Naive thymus-derived CD4-positive, alpha-beta T cell (primary cell): ENCODE measurements at regions of chr7 and their contacts with region 1.

Region 1: DNA sequence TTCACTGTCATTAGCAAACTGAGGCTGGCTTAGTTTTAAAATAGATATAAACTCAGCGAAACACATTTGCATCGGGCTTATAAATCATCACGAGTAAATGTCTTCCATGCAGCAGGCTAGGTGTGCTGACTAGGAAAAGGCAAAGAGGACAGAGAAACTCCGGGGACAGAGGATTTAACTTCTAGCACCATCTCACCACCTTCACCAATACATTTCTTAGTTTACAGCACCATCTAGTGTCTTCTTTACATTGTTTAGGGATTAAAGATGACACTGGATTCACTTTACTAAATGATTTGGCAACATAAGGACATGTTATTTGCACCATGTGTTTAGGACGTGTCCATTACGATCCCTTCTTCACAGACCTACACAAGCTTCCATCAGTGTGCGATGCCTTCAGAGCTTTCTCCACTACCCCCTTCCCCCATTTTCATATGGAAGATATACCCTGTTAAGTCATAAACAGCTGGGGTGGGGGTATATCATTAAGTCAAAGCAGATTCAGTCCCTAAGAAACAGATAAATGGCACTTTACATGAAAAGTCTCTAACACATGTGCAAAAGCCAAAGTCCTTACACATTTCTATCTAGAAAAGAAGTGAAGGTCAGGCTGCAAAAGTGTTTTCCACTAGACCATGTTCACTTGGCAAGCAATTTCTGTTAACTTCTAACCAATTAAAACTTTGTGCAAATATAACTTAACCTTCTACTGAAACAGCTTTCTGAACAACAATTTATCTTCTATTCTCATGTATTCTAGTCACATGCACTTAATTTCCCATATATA is 103.3 kb downstream of the GRB10 start:
- DNase-seq: peak in 6 of 9 donors; percentile 27 to 59 (median 54)
- ATAC-seq: peak; percentile 73
- H3K4me3 ChIP-seq: no peak overlapping the region
- H3K4me3 Mint-ChIP-seq: no peak overlapping the region
- H3K27ac ChIP-seq: no peak overlapping the region
- H3K27ac Mint-ChIP-seq: no peak overlapping the region
- H3K4me1 ChIP-seq: no peaks in the 10 kb centered on the region
- H3K4me1 Mint-ChIP-seq: peaks cover 0 to 5% (median 0%) of the 10 kb centered on the region in 7 donors
- H3K27me3 ChIP-seq: no peaks in the 10 kb centered on the region
- H3K27me3 Mint-ChIP-seq: peaks cover 0 to 22% (median 0%) of the 10 kb centered on the region in 5 donors

Region 2: GRCh38 chr7:50119815-50120637 is 559.4 kb before region 1 on chr7:
- CTCF ChIA-PET with region 1: no interaction called
- POLR2A ChIA-PET with region 1: no interaction called
- intact Hi-C with region 1: loop called in 1 of 2 experiments (anchors 1 kb)
- DNase-seq: peak in 7 of 9 donors; percentile 10 to 44 (median 23)
- ATAC-seq: peak; percentile 54
- H3K4me3 ChIP-seq: no peak overlapping the region
- H3K4me3 Mint-ChIP-seq: no peak overlapping the region
- H3K27ac ChIP-seq: no peak overlapping the region
- H3K27ac Mint-ChIP-seq: no peak overlapping the region
- H3K4me1 ChIP-seq: no peaks in the 10 kb centered on the region
- H3K4me1 Mint-ChIP-seq: no peaks in the 10 kb centered on the region
- H3K27me3 ChIP-seq: no peaks in the 10 kb centered on the region
- H3K27me3 Mint-ChIP-seq: peaks cover 0 to 49% (median 0%) of the 10 kb centered on the region in 5 donors

Region 3: GRCh38 chr7:50142425-50143017 is 536.9 kb before region 1 on chr7:
- CTCF ChIA-PET with region 1: interaction called, 5 read pairs
- POLR2A ChIA-PET with region 1: no interaction called
- intact Hi-C with region 1: loop called (anchors 1 to 5 kb)
- DNase-seq: peak in 7 of 9 donors; percentile 43 to 72 (median 62)
- ATAC-seq: peak; percentile 83
- H3K4me3 ChIP-seq: no peak overlapping the region
- H3K4me3 Mint-ChIP-seq: peak overlapping the region in 9 of 10 donors; percentile 13 to 86 (median 64)
- H3K27ac ChIP-seq: peak overlapping the region; percentile 55
- H3K27ac Mint-ChIP-seq: peak overlapping the region in 8 of 9 donors; percentile 16 to 91 (median 62)
- H3K4me1 ChIP-seq: peaks cover 3% of the 10 kb centered on the region in 2 donors
- H3K4me1 Mint-ChIP-seq: peaks cover 0 to 37% (median 12%) of the 10 kb centered on the region in 7 donors
- H3K27me3 ChIP-seq: no peaks in the 10 kb centered on the region
- H3K27me3 Mint-ChIP-seq: peaks cover 0 to 18% (median 0%) of the 10 kb centered on the region in 5 donors

Region 4: GRCh38 chr7:51141451-51142003 is 462.1 kb after region 1 on chr7:
- CTCF ChIA-PET with region 1: no interaction called
- POLR2A ChIA-PET with region 1: no interaction called
- intact Hi-C with region 1: loop called in 1 of 2 experiments (anchors 1 kb)
- DNase-seq: peak in 4 of 9 donors; percentile 16 to 39 (median 26)
- ATAC-seq: peak; percentile 24
- H3K4me3 ChIP-seq: no peak overlapping the region
- H3K4me3 Mint-ChIP-seq: no peak overlapping the region
- H3K27ac ChIP-seq: no peak overlapping the region
- H3K27ac Mint-ChIP-seq: no peak overlapping the region
- H3K4me1 ChIP-seq: no peaks in the 10 kb centered on the region
- H3K4me1 Mint-ChIP-seq: peaks cover 0 to 17% (median 4%) of the 10 kb centered on the region in 7 donors
- H3K27me3 ChIP-seq: no peaks in the 10 kb centered on the region
- H3K27me3 Mint-ChIP-seq: peaks cover 0 to 10% (median 5%) of the 10 kb centered on the region in 5 donors